Mammary epithelial cell (primary cell): ENCODE measurements at regions of chr4 and their contacts with region 1.

Region 1: DNA sequence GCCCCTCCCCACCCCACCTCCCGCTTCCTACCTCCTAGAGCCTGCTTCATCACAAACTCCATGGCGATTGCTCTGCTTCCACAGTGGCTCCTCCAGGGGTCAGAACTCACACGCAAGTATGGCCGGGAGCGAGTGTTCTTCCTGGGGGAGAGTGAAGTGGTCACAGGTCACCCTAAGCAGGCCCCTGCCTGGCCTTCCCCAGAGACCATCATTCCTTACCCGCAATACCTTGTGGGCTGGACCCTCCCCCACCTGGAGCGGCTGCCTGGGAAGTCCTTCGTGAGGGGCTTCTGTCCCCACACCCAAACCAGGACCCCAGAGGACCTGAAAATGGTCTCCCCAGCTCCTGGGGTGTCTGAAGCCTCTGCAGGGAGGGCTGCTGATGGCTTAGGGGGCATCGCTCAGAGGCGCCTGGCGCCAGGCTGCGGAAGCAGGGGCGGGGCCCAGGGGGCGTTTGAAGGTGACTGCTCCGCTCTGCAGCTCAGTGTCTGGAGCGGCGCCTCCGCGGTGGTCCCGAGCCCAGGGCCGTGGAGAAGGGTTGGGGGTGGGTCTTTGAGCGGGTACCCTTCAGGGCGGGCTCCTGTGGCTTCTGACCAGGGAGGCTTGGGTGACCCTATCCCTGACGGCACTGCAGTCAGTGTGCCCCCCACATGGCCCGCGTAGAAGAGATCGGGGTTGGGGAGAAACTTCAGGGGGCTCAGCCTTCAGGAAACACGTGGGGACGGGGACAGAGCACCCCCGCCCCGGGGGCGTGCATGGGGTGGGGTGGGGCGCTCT is 1.3 kb downstream of the CPLX1 start:
- DNase-seq: no peak
- H3K4me3 ChIP-seq: no peak overlapping the region
- H3K27ac ChIP-seq: no peak overlapping the region
- H3K4me1 ChIP-seq: no peaks in the 10 kb centered on the region
- H3K27me3 ChIP-seq: peaks cover 34% of the 10 kb centered on the region
- CTCF ChIP-seq: no peak

Region 2: GRCh38 chr4:473570-474457 is 350.8 kb before region 1 on chr4:
- CTCF ChIA-PET with region 1: no interaction called
- dilution Hi-C with region 1: no loop called
- in situ Hi-C with region 1: no loop called
- intact Hi-C with region 1: no loop called
- DNase-seq: peak; percentile 99
- H3K4me3 ChIP-seq: peak overlapping the region; percentile 73 to 77 (median 77)
- H3K27ac ChIP-seq: peak overlapping the region; percentile 85
- H3K4me1 ChIP-seq: peaks cover 14% of the 10 kb centered on the region
- H3K27me3 ChIP-seq: no peaks in the 10 kb centered on the region
- CTCF ChIP-seq: no peak

Region 3: DNA sequence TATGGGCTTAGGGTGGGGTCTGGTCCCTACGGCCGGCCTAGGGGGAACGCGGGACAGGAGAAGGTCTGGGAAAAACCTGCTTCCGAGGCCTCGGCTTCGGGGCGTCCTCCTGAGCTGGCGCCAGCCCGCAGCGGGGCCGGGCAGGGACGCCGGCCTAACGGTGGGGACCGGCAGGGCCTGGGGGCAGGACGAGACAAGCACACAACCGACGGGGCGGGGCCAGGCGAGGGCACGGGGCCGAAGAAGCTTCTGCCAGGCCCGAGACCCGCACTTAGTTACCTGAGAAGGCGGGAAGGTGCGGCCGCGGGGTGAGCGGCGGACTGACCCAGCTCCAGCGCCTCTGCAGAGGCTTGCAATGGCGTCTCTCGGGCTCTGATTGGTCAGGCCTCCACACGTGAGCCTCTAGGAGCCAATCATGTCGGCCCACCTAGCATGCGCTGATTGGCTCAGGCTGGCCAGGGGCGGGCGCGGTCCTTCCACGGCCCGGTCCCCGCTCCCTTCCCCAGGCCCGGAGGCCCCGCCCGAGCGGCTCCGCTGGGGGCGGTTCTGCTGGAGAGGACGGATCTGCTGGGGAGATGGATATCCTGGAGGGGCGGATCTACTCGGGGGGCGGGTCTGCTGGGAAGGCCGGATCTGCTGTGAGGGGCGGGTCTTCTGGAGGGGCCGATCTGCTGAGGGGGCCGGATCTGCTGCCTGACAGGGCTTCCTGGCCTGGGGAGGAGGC is 43.0 kb before region 1 on chr4:
- CTCF ChIA-PET with region 1: interaction called, 16 read pairs
- dilution Hi-C with region 1: no loop called
- in situ Hi-C with region 1: no loop called
- intact Hi-C with region 1: loop called (anchors 5 kb)
- DNase-seq: peak; percentile 100
- H3K4me3 ChIP-seq: peak overlapping the region; percentile 77 to 92 (median 91)
- H3K27ac ChIP-seq: peak overlapping the region; percentile 80
- H3K4me1 ChIP-seq: peaks cover 17% of the 10 kb centered on the region
- H3K27me3 ChIP-seq: peaks cover under 1% of the 10 kb centered on the region
- CTCF ChIP-seq: no peak

Region 4: DNA sequence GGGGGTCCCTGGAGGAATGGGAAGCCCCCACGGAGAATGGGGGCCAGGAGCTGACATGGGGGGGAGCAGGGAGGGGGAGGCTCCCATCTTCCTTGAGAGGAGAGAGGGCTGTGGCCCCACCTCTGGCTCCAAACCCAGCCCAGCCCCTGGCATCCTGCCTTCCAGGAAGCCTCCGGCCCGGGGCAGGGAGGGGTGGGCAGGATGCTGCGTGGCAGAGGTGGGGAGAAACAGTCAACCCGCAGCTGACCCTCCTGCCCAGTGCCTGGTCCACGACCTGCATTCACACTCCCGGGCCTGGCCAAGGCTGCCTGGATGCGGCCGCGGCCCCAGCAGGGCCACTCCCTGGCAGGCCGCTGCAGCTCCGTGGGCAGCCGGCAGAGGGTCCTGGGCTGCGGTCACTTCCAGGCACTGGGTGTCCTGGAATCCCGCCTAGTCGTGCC is 37.8 kb before region 1 on chr4:
- CTCF ChIA-PET with region 1: interaction called, 16 read pairs
- dilution Hi-C with region 1: no loop called
- in situ Hi-C with region 1: no loop called
- intact Hi-C with region 1: loop called (anchors 5 kb)
- DNase-seq: no peak
- H3K4me3 ChIP-seq: no peak overlapping the region
- H3K27ac ChIP-seq: no peak overlapping the region
- H3K4me1 ChIP-seq: peaks cover 7% of the 10 kb centered on the region
- H3K27me3 ChIP-seq: peaks cover 3% of the 10 kb centered on the region
- CTCF ChIP-seq: no peak

Region 5: GRCh38 chr4:876780-877179 is 52.1 kb after region 1 on chr4:
- CTCF ChIA-PET with region 1: no interaction called
- dilution Hi-C with region 1: no loop called
- in situ Hi-C with region 1: no loop called
- intact Hi-C with region 1: no loop called
- DNase-seq: no peak
- H3K4me3 ChIP-seq: no peak overlapping the region
- H3K27ac ChIP-seq: no peak overlapping the region
- H3K4me1 ChIP-seq: no peaks in the 10 kb centered on the region
- H3K27me3 ChIP-seq: no peaks in the 10 kb centered on the region
- CTCF ChIP-seq: no peak